Activated naive CD8-positive, alpha-beta T cell treated with anti-CD3 and anti-CD28 coated beads, Interleukin-2, amount 10 ng/mL, durations not matched to agents 7 days and 5 days (primary cell): ENCODE measurements at regions of chr9 and their contacts with region 1.

Region 1: DNA sequence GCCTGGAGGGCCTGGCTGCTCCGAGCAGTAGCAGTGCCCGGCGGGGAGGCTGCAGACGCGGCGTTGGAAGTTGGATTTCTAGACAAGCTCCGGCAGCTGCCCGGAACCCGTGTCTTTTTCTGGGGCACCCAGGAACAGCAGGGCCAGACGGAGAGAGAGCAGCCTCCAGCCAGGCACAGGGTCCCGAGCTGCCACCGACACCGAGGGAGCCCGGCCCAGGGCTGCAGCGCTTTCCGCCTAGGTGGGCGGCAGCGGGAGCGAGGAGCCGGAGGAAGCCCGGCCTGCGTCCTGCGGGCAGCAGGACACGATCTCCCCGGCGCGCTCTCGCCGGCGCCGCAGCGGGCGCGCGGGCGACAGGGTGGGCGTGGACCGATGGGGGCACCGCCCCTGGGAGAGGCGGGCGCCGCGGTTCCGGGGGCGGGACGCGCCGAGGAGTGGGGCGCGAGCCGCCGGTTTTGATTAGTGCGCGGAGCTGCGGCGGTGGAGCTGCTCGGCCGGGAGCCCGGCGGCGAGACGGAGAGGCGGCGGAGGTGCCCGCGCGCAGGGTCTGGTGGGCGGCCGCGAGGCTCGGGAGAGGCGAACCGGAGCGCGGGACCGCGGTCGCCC is at the start of gene UGCG:
- DNase-seq: peak; percentile 95
- ATAC-seq: peak; percentile 85
- H3K4me3 Mint-ChIP-seq: peak within 1 kb of the TSS; percentile 93
- H3K27ac Mint-ChIP-seq: peak within 1 kb of the TSS; percentile 90
- H3K4me1 Mint-ChIP-seq: peaks cover 13% of the 10 kb centered on the region
- H3K27me3 Mint-ChIP-seq: no peaks in the 10 kb centered on the region
- total RNA-seq, gene UGCG: 24.9 to 27.1 TPM

Region 2: GRCh38 chr9:111399772-111400563 is 496.5 kb before region 1 on chr9:
- POLR2A ChIA-PET with region 1: no interaction called
- DNase-seq: no peak
- ATAC-seq: peak; percentile 33
- H3K4me3 Mint-ChIP-seq: no peak overlapping the region
- H3K27ac Mint-ChIP-seq: no peak overlapping the region
- H3K4me1 Mint-ChIP-seq: peaks cover under 1% of the 10 kb centered on the region
- H3K27me3 Mint-ChIP-seq: no peaks in the 10 kb centered on the region

Region 3: GRCh38 chr9:111691672-111692329 is 204.7 kb before region 1 on chr9:
- POLR2A ChIA-PET with region 1: no interaction called
- DNase-seq: no peak
- ATAC-seq: no peak
- H3K4me3 Mint-ChIP-seq: no peak overlapping the region
- H3K27ac Mint-ChIP-seq: no peak overlapping the region
- H3K4me1 Mint-ChIP-seq: no peaks in the 10 kb centered on the region
- H3K27me3 Mint-ChIP-seq: no peaks in the 10 kb centered on the region

Region 4: GRCh38 chr9:111916234-111916645 is 19.8 kb after region 1 on chr9:
- POLR2A ChIA-PET with region 1: interaction called, 24 read pairs
- DNase-seq: no peak
- ATAC-seq: peak; percentile 70
- H3K4me3 Mint-ChIP-seq: peak overlapping the region; percentile 58
- H3K27ac Mint-ChIP-seq: peak overlapping the region; percentile 62
- H3K4me1 Mint-ChIP-seq: peaks cover 38% of the 10 kb centered on the region
- H3K27me3 Mint-ChIP-seq: no peaks in the 10 kb centered on the region

Region 5: DNA sequence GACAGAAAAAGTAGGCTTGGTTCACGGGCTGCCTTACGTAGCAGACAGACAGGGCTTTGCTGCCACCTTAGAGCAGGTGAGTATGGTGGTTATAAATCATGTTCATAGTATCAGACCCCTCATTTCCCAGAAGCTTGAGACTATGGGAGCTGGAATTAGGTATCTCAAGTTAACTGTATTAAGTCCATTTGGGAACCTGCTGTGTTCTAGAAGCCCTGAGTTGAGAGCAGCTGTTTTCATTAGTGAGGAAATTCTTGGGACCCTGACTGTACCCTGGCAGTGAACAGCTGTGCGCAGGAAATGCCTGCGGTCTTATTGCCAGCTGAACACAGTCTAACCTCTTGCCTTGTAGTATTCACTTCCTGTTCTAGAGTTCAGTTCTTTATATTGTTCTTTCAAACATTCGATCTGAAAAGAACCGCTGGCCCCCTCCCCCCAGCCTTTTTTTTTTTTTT is 30.0 kb after region 1 on chr9:
- POLR2A ChIA-PET with region 1: interaction called, 29 read pairs
- DNase-seq: peak; percentile 53
- ATAC-seq: peak; percentile 99
- H3K4me3 Mint-ChIP-seq: peak overlapping the region; percentile 70
- H3K27ac Mint-ChIP-seq: peak overlapping the region; percentile 86
- H3K4me1 Mint-ChIP-seq: peaks cover 27% of the 10 kb centered on the region
- H3K27me3 Mint-ChIP-seq: no peaks in the 10 kb centered on the region

Region 6: GRCh38 chr9:112037281-112038016 is 141.0 kb after region 1 on chr9:
- POLR2A ChIA-PET with region 1: interaction called, 10 read pairs
- DNase-seq: peak; percentile 69
- ATAC-seq: peak; percentile 95
- H3K4me3 Mint-ChIP-seq: peak overlapping the region; percentile 33
- H3K27ac Mint-ChIP-seq: peak overlapping the region; percentile 87
- H3K4me1 Mint-ChIP-seq: peaks cover 56% of the 10 kb centered on the region
- H3K27me3 Mint-ChIP-seq: no peaks in the 10 kb centered on the region

Region 7: DNA sequence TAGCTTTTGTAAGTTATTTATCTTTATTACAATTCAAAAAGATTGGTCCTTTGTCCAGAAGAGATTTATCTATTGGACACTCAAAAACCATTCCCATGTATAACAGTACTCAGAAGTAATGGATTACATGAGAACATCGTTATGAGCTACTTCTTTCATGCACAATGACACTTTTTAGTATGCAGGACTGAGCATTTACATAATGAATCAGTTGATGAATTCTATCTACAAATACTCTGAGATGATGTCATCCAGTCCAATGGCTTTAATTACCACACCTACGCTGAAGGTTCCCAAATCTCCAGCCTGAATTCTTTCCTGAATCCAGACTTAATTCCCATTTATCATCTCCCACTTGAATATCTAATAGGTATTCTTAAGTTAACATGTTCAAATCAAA is 361.7 kb after region 1 on chr9:
- POLR2A ChIA-PET with region 1: no interaction called
- DNase-seq: no peak
- ATAC-seq: no peak
- H3K4me3 Mint-ChIP-seq: no peak overlapping the region
- H3K27ac Mint-ChIP-seq: no peak overlapping the region
- H3K4me1 Mint-ChIP-seq: peaks cover 3% of the 10 kb centered on the region
- H3K27me3 Mint-ChIP-seq: no peaks in the 10 kb centered on the region